Endothelial cell of umbilical vein (primary cell): ENCODE measurements at regions of chr11 and their contacts with region 1.

Region 1: DNA sequence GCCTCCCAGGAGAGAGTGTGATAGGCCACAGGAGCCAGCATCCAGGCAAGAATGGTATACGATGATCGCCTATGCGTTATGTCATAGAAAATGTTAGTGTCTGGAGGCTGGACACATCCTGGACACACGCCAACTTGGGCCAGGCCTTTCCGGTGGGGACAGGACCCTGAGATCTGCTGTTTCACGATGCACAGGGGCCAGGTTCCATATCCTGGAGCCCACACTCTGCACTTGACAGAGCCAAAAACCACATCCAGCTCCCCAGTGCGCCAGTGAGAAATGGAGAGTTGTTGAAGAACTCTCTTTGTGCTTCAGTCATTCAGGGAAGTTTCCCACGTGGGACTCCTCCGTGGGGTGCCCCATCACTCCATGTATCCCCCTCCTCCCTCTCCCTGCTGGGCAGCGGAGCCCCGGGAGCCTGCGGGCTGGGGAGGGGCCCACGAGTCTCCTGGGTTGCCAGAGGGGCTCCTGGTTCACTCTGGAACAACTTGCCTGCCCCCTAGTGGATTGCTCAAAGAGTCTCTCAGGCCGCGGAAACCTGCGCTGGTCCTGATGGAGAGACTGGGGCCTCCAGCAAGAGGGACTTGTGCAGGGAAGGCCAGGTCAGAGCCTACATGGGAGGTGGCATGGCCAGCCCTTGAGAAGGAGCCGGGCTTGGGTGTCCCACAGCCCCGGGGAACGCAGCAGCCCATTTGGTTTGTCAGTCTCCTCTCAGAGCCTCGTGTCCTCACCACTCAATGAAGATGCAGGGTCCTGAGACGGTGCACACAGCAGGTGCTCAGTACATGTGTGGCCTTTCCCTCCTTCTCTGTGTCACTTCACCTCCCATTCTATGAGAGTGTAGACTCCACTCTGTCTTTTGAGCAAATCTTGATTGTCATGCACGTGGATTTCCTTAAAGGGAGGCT is 10.2 kb upstream of the LRRC32 start:
- DNase-seq: peak; percentile 74
- H3K4me3 ChIP-seq: no peak overlapping the region
- H3K27ac ChIP-seq: no peak overlapping the region
- H3K4me1 ChIP-seq: no peaks in the 10 kb centered on the region
- H3K27me3 ChIP-seq: no peaks in the 10 kb centered on the region
- CTCF ChIP-seq: peak; percentile 78 to 89
- POLR2A ChIP-seq: no peak

Region 2: GRCh38 chr11:76235233-76236091 is 445.3 kb before region 1 on chr11:
- CTCF ChIA-PET with region 1: no interaction called
- POLR2A ChIA-PET with region 1: no interaction called
- dilution Hi-C with region 1: no loop called
- intact Hi-C with region 1: loop called (anchors 5 kb)
- DNase-seq: peak; percentile 95
- H3K4me3 ChIP-seq: peak overlapping the region; percentile 68 to 84 (median 76)
- H3K27ac ChIP-seq: no peak overlapping the region
- H3K4me1 ChIP-seq: peaks cover 8% of the 10 kb centered on the region
- H3K27me3 ChIP-seq: no peaks in the 10 kb centered on the region
- CTCF ChIP-seq: no peak
- POLR2A ChIP-seq: no peak

Region 3: DNA sequence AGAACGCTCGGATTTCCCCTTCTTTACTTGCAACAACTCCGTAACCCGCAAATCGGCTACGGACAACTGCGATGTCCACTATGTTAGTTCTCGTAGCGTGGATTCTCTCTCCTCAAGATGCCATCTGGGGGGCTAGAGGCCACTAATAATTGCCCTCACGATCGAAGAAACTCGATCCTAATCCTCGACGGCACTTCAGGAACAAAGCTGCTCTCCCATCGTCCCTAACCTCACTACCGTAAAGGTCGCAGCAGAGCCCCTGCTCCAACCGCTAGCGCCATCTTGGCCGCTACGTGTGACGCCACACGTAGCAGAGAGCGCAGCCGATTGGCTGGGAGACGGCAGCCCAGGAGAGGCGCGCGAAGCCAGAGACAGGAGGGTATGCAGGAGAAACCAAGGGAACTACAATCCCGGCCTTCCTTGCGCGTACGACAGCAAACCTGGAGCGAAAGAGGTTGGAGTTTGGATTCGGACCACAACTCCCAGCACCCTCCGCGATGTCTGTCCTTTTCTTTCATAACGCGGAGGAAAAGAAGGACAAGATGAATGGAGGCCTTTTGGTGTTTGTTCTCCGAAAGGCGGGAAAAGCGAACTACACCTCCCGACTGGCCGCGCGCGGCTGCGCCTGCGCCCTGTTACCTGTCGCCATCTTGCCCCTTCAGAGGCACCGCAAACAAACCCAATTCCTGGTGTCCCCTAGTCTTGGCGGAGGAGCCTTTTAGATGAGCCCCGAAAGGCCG is 236.2 kb before region 1 on chr11 and contains the start of gene EMSY:
- CTCF ChIA-PET with region 1: interaction called, 3 read pairs
- POLR2A ChIA-PET with region 1: no interaction called
- dilution Hi-C with region 1: no loop called
- intact Hi-C with region 1: loop called (anchors 2 kb)
- DNase-seq: peak; percentile 100
- H3K4me3 ChIP-seq: peak within 1 kb of the TSS; percentile 83 to 96 (median 89)
- H3K27ac ChIP-seq: peak within 1 kb of the TSS; percentile 94
- H3K4me1 ChIP-seq: peaks cover 12% of the 10 kb centered on the region
- H3K27me3 ChIP-seq: no peaks in the 10 kb centered on the region
- CTCF ChIP-seq: no peak
- POLR2A ChIP-seq: peak; percentile 98
- total RNA-seq, gene EMSY: 23.4 and 25.7 TPM in 2 replicates

Region 4: GRCh38 chr11:76551400-76551799 is 129.4 kb before region 1 on chr11:
- CTCF ChIA-PET with region 1: interaction called, 17 read pairs
- POLR2A ChIA-PET with region 1: no interaction called
- dilution Hi-C with region 1: no loop called
- intact Hi-C with region 1: loop called (anchors 1 kb)
- DNase-seq: peak; percentile 65
- H3K4me3 ChIP-seq: no peak overlapping the region
- H3K27ac ChIP-seq: peak overlapping the region; percentile 42
- H3K4me1 ChIP-seq: peaks cover 42% of the 10 kb centered on the region
- H3K27me3 ChIP-seq: no peaks in the 10 kb centered on the region
- CTCF ChIP-seq: peak in 1 of 2 donors; percentile 7
- POLR2A ChIP-seq: no peak

Region 5: GRCh38 chr11:76670485-76671236 is 10.1 kb before region 1 on chr11 and contains the start of gene LRRC32:
- CTCF ChIA-PET with region 1: interaction called, 17 read pairs
- POLR2A ChIA-PET with region 1: no interaction called
- dilution Hi-C with region 1: no loop called
- intact Hi-C with region 1: no loop called
- DNase-seq: peak; percentile 82
- H3K4me3 ChIP-seq: peak within 1 kb of the TSS; percentile 2 to 67 (median 59)
- H3K27ac ChIP-seq: peak within 1 kb of the TSS; percentile 79
- H3K4me1 ChIP-seq: peaks cover 53% of the 10 kb centered on the region
- H3K27me3 ChIP-seq: no peaks in the 10 kb centered on the region
- CTCF ChIP-seq: peak in 1 of 2 donors; percentile 33
- POLR2A ChIP-seq: peak; percentile 41
- total RNA-seq, gene LRRC32: 77.0 and 117 TPM in 2 replicates